Aorta (tissue), 5 donors: ENCODE measurements at regions of chr12 and their contacts with region 1.

Region 1: DNA sequence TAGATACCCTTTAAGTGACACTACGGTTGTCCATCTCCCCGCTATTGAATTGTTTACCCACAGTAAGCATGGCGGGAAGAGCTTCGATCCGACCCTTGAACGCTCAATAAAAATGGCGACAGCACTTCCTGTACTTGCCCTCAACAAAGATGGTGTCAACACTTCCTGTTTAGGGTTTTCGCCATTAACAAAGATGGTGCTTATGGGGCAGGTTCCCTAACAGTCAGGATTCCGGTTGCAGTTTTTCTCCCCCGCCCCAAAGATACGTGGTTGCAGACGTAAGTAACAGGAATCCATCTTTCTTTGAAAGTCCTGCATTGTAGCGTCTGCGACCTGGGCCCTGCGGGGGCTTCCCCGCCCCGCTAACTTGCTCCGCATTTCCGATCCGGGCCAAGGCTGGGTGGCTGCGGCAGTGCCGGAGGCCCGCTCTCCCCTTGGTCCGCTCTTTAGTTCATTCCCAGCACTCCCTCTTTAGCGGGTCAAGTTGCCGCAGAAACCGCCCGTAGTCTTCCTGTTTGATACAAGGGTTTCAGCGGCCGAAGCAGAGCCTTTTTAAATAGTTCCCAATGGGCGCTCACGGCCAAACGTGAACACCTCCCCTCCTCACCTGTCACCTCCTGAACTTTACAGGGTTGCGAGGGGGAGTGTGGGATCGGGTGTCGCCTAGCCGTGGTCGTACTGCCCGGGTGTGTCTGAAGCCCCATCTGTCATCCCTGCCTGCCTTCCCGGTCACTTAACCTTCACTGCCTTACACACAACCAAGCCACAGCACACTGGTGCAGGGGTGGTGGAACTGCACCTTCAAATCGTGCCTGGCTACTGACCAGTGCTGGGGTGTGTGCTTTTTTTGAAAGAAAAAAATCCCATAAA is at the start of gene CRADD:
- DNase-seq: peak; percentile 87
- ATAC-seq: peak; percentile 98
- H3K4me3 ChIP-seq: peak within 1 kb of the TSS; percentile 40 to 86
- H3K27ac ChIP-seq: peak within 1 kb of the TSS; percentile 72 to 99
- H3K4me1 ChIP-seq: no peaks in the 10 kb centered on the region
- H3K27me3 ChIP-seq: no peaks in the 10 kb centered on the region
- total RNA-seq, gene CRADD: 19.5 to 20.5 TPM

Region 2: DNA sequence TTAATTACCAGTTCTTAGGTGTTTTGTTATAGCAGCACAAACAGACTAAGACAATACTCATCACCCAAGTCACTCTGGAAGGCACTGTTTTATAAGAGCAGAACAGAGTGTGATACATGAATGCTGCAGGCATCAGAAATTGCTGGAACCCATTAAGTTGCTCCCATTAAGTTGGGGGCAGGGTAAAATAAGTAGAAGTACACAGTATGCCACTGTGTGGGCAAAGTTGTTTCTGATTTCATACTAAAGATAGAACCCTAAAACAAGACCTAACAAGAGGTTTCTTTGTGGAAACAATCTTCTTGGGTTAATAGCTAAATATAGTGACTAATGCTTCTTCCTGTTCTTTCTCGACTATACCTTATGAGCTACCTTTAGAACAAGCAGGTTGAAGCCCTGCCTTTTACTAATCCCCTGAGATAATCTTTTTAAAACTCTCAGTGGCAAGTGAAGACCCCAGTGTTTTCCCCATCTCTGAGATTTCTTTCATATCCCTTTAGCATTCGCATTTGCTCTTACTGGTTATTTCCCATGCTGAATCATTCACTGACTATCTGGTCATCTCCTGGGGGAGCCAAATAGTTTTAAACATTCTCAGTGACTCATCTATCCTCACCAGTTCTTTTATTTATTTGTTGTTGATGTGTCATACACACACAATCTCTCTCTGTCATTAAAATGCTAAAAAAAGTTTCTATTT is 52.7 kb before region 1 on chr12:
- intact Hi-C with region 1: loop called in 1 of 2 experiments (anchors 2 kb)
- DNase-seq: no peak
- ATAC-seq: no peak
- H3K4me3 ChIP-seq: no peak overlapping the region
- H3K27ac ChIP-seq: no peak overlapping the region
- H3K4me1 ChIP-seq: no peaks in the 10 kb centered on the region
- H3K27me3 ChIP-seq: no peaks in the 10 kb centered on the region

Region 3: GRCh38 chr12:93742110-93742934 is 64.9 kb after region 1 on chr12:
- intact Hi-C with region 1: loop called (anchors 2 to 5 kb)
- DNase-seq: peak; percentile 84 to 91
- ATAC-seq: peak; percentile 92
- H3K4me3 ChIP-seq: peak overlapping the region; percentile 64 to 95
- H3K27ac ChIP-seq: peak overlapping the region; percentile 46 to 98
- H3K4me1 ChIP-seq: peaks cover 4 to 6% of the 10 kb centered on the region in 2 donors
- H3K27me3 ChIP-seq: no peaks in the 10 kb centered on the region

Region 4: DNA sequence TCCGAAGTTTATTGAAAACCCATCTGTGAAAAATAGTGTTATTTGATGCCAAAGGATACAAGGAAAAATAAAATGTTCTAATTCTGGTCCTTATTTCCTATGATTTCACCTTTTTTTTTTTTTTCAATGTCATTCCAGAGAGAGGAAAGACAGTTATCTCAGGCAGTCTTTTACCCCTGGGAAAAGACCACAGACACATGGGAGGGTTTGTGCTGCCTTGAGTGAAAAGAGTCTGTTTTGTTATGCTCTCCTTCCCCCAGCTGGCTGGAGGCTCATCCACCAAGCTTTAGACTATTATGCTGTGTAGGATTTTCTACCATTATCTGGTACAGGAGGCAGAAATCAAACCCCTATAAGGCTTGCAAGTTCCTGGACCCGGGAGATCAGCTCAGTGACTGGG is 151.6 kb after region 1 on chr12:
- intact Hi-C with region 1: no loop called
- DNase-seq: no peak
- ATAC-seq: no peak
- H3K4me3 ChIP-seq: no peak overlapping the region
- H3K27ac ChIP-seq: peak overlapping the region in 1 of 2 donors; percentile 59
- H3K4me1 ChIP-seq: peaks cover 3 to 8% of the 10 kb centered on the region in 2 donors
- H3K27me3 ChIP-seq: no peaks in the 10 kb centered on the region

Region 5: GRCh38 chr12:94101738-94102660 is 424.6 kb after region 1 on chr12:
- intact Hi-C with region 1: loop called (anchors 5 to 10 kb)
- DNase-seq: peak; percentile 89 to 93
- ATAC-seq: peak; percentile 94
- H3K4me3 ChIP-seq: peak overlapping the region; percentile 50 to 85
- H3K27ac ChIP-seq: peak overlapping the region in 1 of 2 donors; percentile 20
- H3K4me1 ChIP-seq: no peaks in the 10 kb centered on the region
- H3K27me3 ChIP-seq: no peaks in the 10 kb centered on the region